ENCODE measurements at regions of chr1 and their contacts with region 1.

Region 1: DNA sequence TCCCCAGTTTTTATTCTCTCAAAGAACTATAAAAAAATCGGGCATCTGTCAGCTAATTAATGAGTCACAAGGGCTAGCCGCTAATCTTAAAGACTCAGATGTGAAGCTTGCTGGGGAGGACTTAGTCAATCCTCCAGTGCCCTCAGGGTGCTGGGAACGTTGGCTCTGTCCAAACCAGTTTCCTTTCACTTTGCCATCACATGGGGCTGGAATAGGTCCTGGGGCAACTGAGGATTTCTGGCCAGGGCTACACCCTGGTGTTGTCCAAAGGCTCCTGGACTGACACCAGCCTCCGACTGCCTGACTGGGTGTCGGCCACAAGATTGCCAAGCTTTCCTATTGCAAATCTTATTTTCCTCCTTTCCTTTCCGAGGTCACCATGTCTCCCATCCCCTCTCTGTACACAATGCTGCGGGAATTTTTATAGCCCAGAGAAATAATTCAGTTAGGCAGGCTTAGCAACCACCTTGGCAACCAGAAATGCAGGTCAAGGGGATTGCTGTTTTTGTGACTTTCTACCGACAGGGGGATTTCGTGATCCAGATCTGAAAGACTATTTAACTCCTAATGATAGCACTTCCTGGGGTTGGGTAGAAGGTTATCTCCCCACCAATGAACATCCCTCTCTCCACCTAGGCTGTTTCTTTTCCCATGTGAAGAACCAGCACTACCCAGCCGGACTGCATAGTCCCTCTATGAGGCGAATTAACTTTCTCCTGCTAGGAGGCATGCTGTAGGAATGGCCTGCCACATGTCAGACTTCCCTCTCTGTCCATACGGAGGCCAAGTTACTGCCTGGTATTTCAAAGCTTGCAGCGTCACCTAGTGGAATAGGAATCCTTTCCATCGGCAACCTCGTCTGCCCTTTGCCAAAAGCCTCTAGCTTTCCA is 29.9 kb upstream of the CTBS start:
- DNase-seq: no peak
- ATAC-seq: peak; percentile 83

Region 2: GRCh38 chr1:84122780-84123382 is 481.3 kb before region 1 on chr1:
- intact Hi-C with region 1: loop called (anchors 10 kb)
- DNase-seq: no peak
- ATAC-seq: peak; percentile 65

Region 3: DNA sequence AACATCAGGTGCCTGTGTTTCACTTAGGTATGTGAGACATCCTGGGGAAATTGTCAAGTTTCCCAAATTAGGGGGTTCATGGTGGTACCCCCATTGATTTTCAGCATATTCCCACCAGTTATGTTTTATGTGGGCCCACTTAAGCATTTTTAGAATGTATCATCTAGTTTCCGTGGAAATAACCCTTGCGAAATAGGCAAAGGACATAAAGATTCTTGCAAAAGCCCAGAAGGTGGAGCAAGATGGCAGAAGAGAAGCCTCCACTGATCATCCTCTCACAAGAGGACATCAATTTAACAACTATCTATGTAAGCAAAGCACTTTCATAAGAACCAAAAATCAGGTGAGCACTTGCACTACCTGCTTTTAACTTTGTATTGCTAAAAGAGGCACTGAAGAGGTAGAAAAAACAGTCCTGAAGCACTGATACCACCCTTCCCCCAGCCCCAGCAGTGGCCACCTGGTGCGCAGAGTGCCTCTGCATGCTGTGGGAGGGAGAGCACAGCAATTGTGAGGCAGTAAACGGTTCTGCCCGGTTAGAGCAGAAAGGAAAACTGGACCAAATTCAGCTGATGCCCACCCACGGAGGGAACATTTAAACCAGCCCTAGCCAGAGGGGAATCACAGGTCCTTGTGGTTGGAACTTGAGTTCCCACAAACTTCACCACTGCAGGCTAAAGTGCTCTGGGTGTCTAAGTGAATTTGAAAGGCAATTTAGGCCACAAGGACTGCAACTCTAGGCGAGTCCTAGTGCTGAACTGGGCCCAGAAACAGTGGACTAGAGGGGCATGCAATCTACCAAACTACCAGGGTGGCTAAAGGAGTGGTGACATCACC is 369.5 kb after region 1 on chr1:
- intact Hi-C with region 1: no loop called
- DNase-seq: no peak
- ATAC-seq: no peak